ENCODE measurements at regions of chr10 and their contacts with region 1.

Region 1: GRCh38 chr10:92290837-92291615 is at the starts of genes CPEB3 and MARCHF5:
- DNase-seq: peak; percentile 92
- H3K4me3 Mint-ChIP-seq: peak within 1 kb of the TSS; percentile 93
- H3K27ac Mint-ChIP-seq: peak within 1 kb of the TSS; percentile 86
- H3K4me1 Mint-ChIP-seq: peaks cover 27% of the 10 kb centered on the region
- H3K27me3 Mint-ChIP-seq: no peaks in the 10 kb centered on the region
- total RNA-seq, gene CPEB3: 2.5 and 2.7 TPM in 2 replicates
- total RNA-seq, gene MARCHF5: 22.5 and 23.9 TPM in 2 replicates

Region 2: GRCh38 chr10:91923371-91924211 is 367.4 kb before region 1 on chr10 and contains the start of gene BTAF1:
- intact Hi-C with region 1: loop called (anchors 2 kb)
- DNase-seq: peak; percentile 89
- H3K4me3 Mint-ChIP-seq: peak within 1 kb of the TSS; percentile 98
- H3K27ac Mint-ChIP-seq: peak within 1 kb of the TSS; percentile 99
- H3K4me1 Mint-ChIP-seq: peaks cover 36% of the 10 kb centered on the region
- H3K27me3 Mint-ChIP-seq: peaks cover 9% of the 10 kb centered on the region
- total RNA-seq, gene BTAF1: 58.8 and 59.2 TPM in 2 replicates

Region 3: DNA sequence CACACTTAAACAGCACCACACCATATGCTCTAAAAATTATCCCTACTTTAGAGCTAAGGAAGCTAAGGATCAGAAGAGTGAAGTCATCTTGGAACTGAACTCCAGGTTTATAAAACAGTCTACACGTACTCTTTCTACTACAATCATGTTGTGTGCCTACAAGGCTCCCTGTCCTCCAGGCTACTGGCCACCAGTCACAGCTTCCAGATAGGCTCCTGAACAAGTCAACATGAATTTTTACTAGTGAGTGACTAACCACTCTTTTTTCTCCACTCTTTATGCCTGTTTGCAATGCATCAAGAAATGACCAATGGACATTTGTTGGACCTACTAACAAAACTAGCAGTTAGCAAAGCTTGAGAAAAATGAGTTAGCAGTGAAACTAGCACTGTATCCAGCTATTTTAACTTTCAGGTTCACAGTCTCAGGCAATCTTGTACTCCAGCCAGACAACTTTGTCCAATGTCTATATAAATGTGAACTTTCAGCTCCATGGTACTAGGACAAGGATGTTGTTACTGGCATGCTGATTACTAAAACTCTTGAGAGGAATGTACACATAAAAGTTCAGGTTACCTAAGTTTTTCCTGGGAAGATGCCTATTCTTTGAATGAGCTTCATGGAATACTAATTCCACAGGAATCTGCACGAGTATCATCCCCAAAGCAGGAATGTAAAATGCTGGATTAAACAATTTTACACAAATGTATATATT is 187.5 kb before region 1 on chr10:
- intact Hi-C with region 1: loop called (anchors 1 kb)
- DNase-seq: no peak
- H3K4me3 Mint-ChIP-seq: no peak overlapping the region
- H3K27ac Mint-ChIP-seq: no peak overlapping the region
- H3K4me1 Mint-ChIP-seq: peaks cover 22% of the 10 kb centered on the region
- H3K27me3 Mint-ChIP-seq: no peaks in the 10 kb centered on the region

Region 4: DNA sequence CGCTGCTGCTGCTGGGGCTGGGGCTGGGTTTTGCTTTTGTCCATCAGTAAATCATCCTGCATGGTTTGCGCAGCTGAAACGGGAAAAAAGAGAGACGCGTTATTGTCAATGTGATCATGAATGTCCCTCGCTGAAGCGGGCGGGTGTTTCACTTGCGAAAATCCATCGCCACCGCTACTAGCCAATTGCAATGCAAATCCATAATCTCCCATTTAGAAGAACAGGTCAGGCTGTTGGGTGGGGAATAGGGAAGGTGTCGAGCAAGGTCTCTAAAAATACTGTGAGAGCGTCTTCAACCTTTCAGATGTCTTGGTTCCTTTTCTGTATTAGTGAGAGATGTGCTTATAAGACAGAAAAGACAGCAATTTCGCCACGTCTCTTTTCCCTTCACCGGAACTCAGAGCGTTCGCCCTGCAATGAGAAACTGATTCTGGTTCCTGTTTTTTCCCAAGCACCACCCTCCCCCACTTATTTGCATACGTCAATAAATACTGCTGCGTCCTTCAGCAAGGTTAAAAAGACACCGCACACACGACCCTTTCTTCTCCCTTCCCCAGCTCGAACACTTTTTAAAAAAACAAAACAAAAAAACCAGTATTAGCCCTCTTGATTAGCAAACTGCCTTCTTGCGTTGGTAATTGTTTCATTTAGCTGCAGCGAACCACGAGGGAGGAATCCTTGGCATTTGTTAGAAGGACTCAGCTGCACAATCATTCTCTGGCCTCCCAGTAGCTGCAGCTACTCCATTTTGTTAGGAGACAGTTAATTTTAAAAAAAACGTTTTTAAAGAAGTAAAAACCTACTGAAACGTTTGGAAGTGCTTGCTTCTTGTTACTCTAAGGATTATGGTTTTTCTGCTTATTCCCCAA is 50.5 kb before region 1 on chr10:
- intact Hi-C with region 1: loop called (anchors 1 kb)
- DNase-seq: peak; percentile 28
- H3K4me3 Mint-ChIP-seq: peak overlapping the region; percentile 92
- H3K27ac Mint-ChIP-seq: peak overlapping the region; percentile 27
- H3K4me1 Mint-ChIP-seq: peaks cover 32% of the 10 kb centered on the region
- H3K27me3 Mint-ChIP-seq: peaks cover 14% of the 10 kb centered on the region

Region 5: GRCh38 chr10:92278996-92279696 is 11.9 kb before region 1 on chr10:
- intact Hi-C with region 1: no loop called
- DNase-seq: no peak
- H3K4me3 Mint-ChIP-seq: no peak overlapping the region
- H3K27ac Mint-ChIP-seq: no peak overlapping the region
- H3K4me1 Mint-ChIP-seq: peaks cover 2% of the 10 kb centered on the region
- H3K27me3 Mint-ChIP-seq: no peaks in the 10 kb centered on the region

Region 6: DNA sequence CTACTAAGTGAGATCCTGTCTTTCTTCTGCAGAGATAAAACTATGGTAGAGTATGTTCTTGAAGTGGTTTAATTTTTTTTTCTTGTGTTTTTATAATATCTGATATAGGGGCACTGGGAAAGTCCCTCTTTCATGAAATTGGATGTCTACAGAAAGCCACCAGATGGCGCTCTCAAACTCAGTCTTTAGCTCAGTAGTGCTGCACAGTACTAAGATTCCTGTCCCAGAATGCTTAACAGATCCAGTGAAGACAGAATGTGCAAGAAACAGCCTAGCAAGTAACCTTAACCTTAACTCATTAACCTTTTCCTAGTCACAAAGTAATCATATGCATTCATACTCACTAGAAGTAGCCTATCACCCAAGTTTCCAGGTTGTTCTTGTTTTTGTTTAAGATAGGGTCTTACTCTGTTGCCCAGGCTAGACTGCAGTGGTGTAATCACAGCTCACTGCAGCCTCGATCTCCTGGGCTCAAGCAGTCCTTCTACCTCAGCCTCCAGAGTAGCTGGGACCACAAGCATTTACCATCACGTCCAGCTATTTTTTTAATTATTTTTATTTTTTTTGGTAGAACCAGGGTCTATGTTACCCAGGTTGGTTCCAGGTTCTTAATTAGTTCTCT is 226.1 kb after region 1 on chr10:
- intact Hi-C with region 1: no loop called
- DNase-seq: peak; percentile 48
- H3K4me3 Mint-ChIP-seq: no peak overlapping the region
- H3K27ac Mint-ChIP-seq: no peak overlapping the region
- H3K4me1 Mint-ChIP-seq: peaks cover 8% of the 10 kb centered on the region
- H3K27me3 Mint-ChIP-seq: no peaks in the 10 kb centered on the region

Region 7: GRCh38 chr10:92573798-92574547 is 282.9 kb after region 1 on chr10 and contains the start of gene IDE:
- intact Hi-C with region 1: loop called (anchors 1 kb)
- DNase-seq: peak; percentile 84
- H3K4me3 Mint-ChIP-seq: peak within 1 kb of the TSS; percentile 88
- H3K27ac Mint-ChIP-seq: peak within 1 kb of the TSS; percentile 89
- H3K4me1 Mint-ChIP-seq: peaks cover 37% of the 10 kb centered on the region
- H3K27me3 Mint-ChIP-seq: no peaks in the 10 kb centered on the region
- total RNA-seq, gene IDE: 43.4 and 54.5 TPM in 2 replicates

Region 8: DNA sequence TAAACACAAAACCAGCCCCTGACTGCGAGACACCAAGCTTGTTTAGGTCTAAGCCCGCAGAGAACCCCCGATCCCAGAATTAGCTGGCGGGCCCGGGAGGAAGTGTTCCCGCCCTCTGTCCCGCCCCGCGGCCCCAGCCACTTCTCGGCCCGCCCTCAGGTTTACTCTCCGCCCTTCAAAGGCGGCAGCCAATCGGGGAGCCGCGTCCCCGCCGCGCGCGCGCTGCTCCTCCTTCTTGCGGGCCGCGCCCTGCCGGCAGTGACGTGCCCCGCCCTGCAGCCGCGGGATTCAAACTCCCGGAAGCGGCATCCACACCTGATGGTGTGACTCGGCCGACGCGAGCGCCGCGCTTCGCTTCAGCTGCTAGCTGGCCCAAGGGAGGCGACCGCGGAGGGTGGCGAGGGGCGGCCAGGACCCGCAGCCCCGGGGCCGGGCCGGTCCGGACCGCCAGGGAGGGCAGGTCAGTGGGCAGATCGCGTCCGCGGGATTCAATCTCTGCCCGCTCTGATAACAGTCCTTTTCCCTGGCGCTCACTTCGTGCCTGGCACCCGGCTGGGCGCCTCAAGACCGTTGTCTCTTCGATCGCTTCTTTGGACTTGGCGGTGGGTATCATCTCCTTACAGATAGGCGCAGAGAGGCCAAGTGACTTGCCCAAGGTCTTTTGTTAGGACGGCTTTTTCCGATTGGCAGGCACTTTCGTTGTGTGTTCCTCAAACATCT is 1205.5 kb after region 1 on chr10 and contains the start of gene CEP55:
- intact Hi-C with region 1: loop called (anchors 5 kb)
- DNase-seq: peak; percentile 96
- H3K4me3 Mint-ChIP-seq: peak within 1 kb of the TSS; percentile 88
- H3K27ac Mint-ChIP-seq: peak within 1 kb of the TSS; percentile 95
- H3K4me1 Mint-ChIP-seq: peaks cover 46% of the 10 kb centered on the region
- H3K27me3 Mint-ChIP-seq: no peaks in the 10 kb centered on the region
- total RNA-seq, gene CEP55: 53.0 and 55.7 TPM in 2 replicates